ENCODE measurements at regions of chr20 and their contacts with region 1.

Region 1: GRCh38 chr20:58209652-58210397 is 18.6 kb downstream of the ANKRD60 start:
- DNase-seq: peak; percentile 78 to 80
- ATAC-seq: peak; percentile 78 to 90
- H3K4me3 ChIP-seq: no peak overlapping the region
- H3K27ac ChIP-seq: peak overlapping the region; percentile 19 to 77; a peak in 5 of 6 replicates
- H3K4me1 ChIP-seq: 0 out of 3 replicates have a peak, but pooled peaks cover 3% of the 10 kb centered on the region
- CTCF ChIP-seq: peak; percentile 100
- EP300 ChIP-seq: no peak
- POLR2A ChIP-seq: no peak
- RAD21 ChIP-seq: peak; percentile 99 to 100

Region 2: GRCh38 chr20:57514273-57514751 is 695.5 kb before region 1 on chr20:
- CTCF ChIA-PET with region 1: interaction called, 88 read pairs
- POLR2A ChIA-PET with region 1: no interaction called
- DNase-seq: peak; percentile 68 to 73
- ATAC-seq: peak; percentile 74 to 88; a peak in 5 of 6 replicates
- H3K4me3 ChIP-seq: no peak overlapping the region
- H3K27ac ChIP-seq: no peak overlapping the region
- H3K4me1 ChIP-seq: no peaks in the 10 kb centered on the region
- CTCF ChIP-seq: peak; percentile 90
- EP300 ChIP-seq: no peak
- POLR2A ChIP-seq: no peak
- RAD21 ChIP-seq: peak; percentile 97 to 98

Region 3: GRCh38 chr20:57532104-57532503 is 677.7 kb before region 1 on chr20:
- CTCF ChIA-PET with region 1: interaction called, 12 read pairs
- POLR2A ChIA-PET with region 1: no interaction called
- DNase-seq: no peak
- ATAC-seq: no peak
- H3K4me3 ChIP-seq: no peak overlapping the region
- H3K27ac ChIP-seq: no peak overlapping the region
- H3K4me1 ChIP-seq: no peaks in the 10 kb centered on the region
- CTCF ChIP-seq: no peak
- EP300 ChIP-seq: no peak
- POLR2A ChIP-seq: no peak
- RAD21 ChIP-seq: no peak

Region 4: GRCh38 chr20:57596998-57597939 is 612.6 kb before region 1 on chr20:
- CTCF ChIA-PET with region 1: interaction called, 324 read pairs
- POLR2A ChIA-PET with region 1: no interaction called
- DNase-seq: peak; percentile 53 to 75
- ATAC-seq: peak; percentile 67 to 91
- H3K4me3 ChIP-seq: peak overlapping the region; percentile 34
- H3K27ac ChIP-seq: peak overlapping the region; percentile 56 to 83; a peak in 4 of 6 replicates
- H3K4me1 ChIP-seq: peaks cover 15% of the 10 kb centered on the region; the same call in 2 of the 3 replicates
- CTCF ChIP-seq: peak; percentile 97
- EP300 ChIP-seq: no peak
- POLR2A ChIP-seq: no peak
- RAD21 ChIP-seq: peak; percentile 93 to 99

Region 5: DNA sequence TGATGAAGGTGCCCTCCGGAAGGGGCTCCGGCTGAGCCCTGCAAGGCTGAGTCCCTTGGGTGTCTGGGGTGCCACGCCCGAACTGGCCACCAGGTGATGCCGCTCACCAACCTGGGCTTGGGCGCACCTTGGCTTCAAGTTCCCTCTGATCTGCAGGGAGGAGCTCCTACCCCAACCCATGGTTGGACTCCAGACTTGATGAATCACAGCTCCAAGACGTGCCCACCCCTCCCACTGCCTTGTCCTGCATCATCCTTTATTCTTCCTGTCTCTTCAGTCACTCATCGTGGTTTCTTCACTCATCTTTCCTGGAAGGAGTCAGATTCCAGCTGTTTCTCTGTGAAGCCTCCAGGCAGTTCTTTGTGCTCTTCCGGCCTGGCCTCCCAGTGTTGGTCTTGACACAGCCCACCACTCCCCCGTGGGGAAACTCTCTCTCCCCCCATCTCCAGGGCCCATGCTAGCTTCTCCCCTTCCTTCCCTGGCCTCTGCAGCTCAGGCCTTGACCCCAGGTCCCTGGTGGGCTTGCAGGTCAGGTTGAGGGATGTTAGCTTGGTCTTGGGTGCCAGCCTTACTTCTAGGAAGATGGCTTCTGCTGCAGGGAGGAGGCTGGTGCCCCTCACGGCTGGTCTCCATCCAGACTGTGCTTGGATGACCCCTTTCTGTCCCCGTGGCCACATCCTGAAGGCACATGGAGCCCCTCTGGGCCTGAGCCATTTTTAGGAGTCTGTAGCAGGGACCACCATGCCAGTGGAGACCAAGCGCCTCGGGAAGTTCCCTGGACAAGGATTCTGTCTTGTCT is 587.0 kb before region 1 on chr20:
- CTCF ChIA-PET with region 1: interaction called, 109 read pairs
- POLR2A ChIA-PET with region 1: no interaction called
- DNase-seq: peak; percentile 88 to 91
- ATAC-seq: peak; percentile 90 to 98
- H3K4me3 ChIP-seq: no peak overlapping the region
- H3K27ac ChIP-seq: peak overlapping the region; percentile 67 to 82
- H3K4me1 ChIP-seq: peaks cover 25% of the 10 kb centered on the region
- CTCF ChIP-seq: peak; percentile 87
- EP300 ChIP-seq: no peak
- POLR2A ChIP-seq: no peak
- RAD21 ChIP-seq: peak; percentile 95 to 96

Region 6: DNA sequence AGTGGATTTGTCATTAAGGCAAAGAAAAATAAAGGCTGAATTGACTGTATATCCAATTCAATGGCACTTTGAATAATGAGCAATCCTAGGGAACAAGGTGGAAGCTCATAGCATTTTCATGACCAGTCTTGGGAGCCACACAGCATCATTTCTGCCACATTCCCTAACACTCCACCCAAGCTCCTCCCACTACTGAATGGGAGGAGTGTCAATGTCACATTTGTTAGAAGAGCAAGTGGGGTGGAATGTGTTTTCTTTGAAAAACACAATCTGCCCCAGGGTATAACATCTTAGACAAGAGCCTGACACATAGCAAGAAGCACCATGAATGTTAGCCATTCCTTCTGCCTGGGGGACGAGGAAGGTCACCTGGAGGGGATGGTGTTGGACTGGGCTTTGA is 241.7 kb before region 1 on chr20:
- CTCF ChIA-PET with region 1: no interaction called
- POLR2A ChIA-PET with region 1: no interaction called
- DNase-seq: no peak
- ATAC-seq: no peak
- H3K4me3 ChIP-seq: no peak overlapping the region
- H3K27ac ChIP-seq: no peak overlapping the region
- H3K4me1 ChIP-seq: no peaks in the 10 kb centered on the region
- CTCF ChIP-seq: no peak
- EP300 ChIP-seq: no peak
- POLR2A ChIP-seq: no peak
- RAD21 ChIP-seq: no peak

Region 7: GRCh38 chr20:58192567-58192966 is 17.3 kb before region 1 on chr20:
- CTCF ChIA-PET with region 1: interaction called, 65 read pairs
- POLR2A ChIA-PET with region 1: no interaction called
- DNase-seq: no peak
- ATAC-seq: peak in 1 of 2 experiments; percentile 58; a peak in 2 of 6 replicates
- H3K4me3 ChIP-seq: no peak overlapping the region
- H3K27ac ChIP-seq: no peak overlapping the region
- H3K4me1 ChIP-seq: no peaks in the 10 kb centered on the region
- CTCF ChIP-seq: peak; percentile 46
- EP300 ChIP-seq: no peak
- POLR2A ChIP-seq: no peak
- RAD21 ChIP-seq: peak; percentile 44 to 45; a peak in 3 of 5 replicates

Region 8: GRCh38 chr20:58277578-58278472 is 68.0 kb after region 1 on chr20:
- CTCF ChIA-PET with region 1: no interaction called
- POLR2A ChIA-PET with region 1: no interaction called
- DNase-seq: no peak
- ATAC-seq: no peak
- H3K4me3 ChIP-seq: no peak overlapping the region
- H3K27ac ChIP-seq: no peak overlapping the region
- H3K4me1 ChIP-seq: no peaks in the 10 kb centered on the region
- CTCF ChIP-seq: no peak
- EP300 ChIP-seq: no peak
- POLR2A ChIP-seq: no peak
- RAD21 ChIP-seq: no peak

Measured in A549 (cell line).